Activated CD4-positive, alpha-beta T cell treated with anti-CD3 and anti-CD28 coated beads for 36 hours (primary cell): ENCODE measurements at regions of chr6 and their contacts with region 1.

Region 1: DNA sequence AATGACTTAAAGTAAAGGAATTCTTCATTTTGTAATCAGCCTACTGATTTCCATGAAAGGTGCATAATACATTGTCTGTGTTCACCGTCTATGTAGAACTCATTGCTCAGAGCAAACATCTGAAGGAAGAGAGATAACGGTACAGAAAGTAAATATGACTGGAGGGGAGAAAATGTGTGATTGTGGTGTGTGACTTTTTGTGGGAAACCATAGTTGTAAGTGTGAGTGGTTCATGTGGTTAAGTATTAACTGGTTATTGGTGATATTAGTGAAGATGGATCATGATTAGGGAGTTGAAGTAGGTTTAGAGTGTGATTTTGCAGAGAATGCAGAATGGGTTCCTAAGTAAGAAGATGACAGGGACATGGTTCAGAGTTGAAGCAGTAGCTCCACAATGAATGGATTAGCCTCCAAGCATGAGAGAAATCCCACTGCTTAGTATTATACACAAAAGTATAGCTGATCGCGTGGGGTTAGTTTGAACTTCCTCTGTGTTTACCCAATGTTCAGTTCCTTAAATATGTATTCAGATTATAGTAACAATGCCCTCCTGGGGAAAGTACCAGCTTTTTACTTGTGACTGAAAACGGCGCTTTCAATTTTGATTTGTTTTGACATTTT is 368.9 kb downstream of the UTRN start:
- DNase-seq: no peak
- ATAC-seq: peak; percentile 79
- H3K4me3 Mint-ChIP-seq: no peak overlapping the region
- H3K27ac Mint-ChIP-seq: peak overlapping the region; percentile 39
- H3K4me1 Mint-ChIP-seq: peaks cover 42% of the 10 kb centered on the region
- H3K27me3 Mint-ChIP-seq: no peaks in the 10 kb centered on the region

Region 2: DNA sequence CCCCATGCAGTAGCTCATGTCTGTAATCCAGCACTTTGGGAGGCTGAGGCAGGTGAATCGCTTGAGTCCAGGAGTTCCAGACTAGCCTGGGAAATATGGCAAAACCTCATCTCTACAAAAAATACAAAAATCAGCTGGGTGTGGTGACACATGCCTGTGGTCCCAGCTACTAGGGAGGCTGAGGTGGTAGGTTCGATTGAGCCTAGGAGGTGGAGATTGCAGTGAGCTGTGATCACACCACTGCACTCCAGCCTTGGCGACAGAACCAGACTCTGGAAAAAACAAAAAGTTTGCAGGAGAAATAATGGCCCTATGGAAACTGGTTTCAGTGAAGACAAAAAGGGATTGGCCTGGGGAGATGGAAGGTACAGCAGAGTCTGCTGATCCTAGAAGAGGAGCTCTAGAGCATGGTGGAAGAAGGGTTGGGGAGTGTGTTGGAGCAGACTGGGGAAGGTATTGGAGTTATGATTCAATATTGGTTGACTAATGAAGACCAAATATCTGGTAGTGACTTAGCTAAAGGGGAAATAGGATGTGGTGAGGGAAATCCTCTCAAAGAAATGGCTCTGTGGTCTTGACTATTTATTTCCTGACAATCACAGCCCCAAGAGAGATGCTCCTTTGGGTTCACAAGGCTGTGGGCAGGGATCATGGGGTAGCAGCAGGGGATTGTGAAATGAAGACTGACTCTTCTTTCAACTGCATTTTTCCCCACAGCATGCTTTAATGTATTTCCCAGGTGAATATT is 87.0 kb before region 1 on chr6:
- CTCF ChIA-PET with region 1: no interaction called
- POLR2A ChIA-PET with region 1: no interaction called
- intact Hi-C with region 1: no loop called
- DNase-seq: peak; percentile 10
- ATAC-seq: peak; percentile 77
- H3K4me3 Mint-ChIP-seq: no peak overlapping the region
- H3K27ac Mint-ChIP-seq: no peak overlapping the region
- H3K4me1 Mint-ChIP-seq: no peaks in the 10 kb centered on the region
- H3K27me3 Mint-ChIP-seq: no peaks in the 10 kb centered on the region

Region 3: DNA sequence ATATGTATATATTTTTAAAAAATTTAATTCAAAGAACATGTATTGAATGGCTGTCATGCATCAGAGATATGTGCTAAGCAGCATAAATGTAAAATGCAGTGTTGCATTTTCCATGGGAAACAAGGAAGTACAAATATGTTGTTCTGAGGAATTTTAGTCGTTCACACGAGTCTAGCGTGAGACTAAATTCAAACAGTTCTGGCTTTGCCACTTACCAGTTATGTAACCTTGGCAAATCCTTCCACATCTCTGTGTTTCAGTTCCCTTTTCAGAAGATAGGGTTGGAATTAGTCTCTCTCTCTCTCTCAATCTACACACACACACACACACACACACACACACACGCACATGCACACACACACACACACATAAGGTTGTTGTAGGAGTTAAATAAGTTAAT is 63.5 kb before region 1 on chr6:
- CTCF ChIA-PET with region 1: no interaction called
- POLR2A ChIA-PET with region 1: no interaction called
- intact Hi-C with region 1: loop called in 1 of 2 experiments (anchors 5 kb)
- DNase-seq: no peak
- ATAC-seq: no peak
- H3K4me3 Mint-ChIP-seq: no peak overlapping the region
- H3K27ac Mint-ChIP-seq: no peak overlapping the region
- H3K4me1 Mint-ChIP-seq: peaks cover 17% of the 10 kb centered on the region
- H3K27me3 Mint-ChIP-seq: no peaks in the 10 kb centered on the region